Lower leg skin (tissue), 4 donors: ENCODE measurements at regions of chr15 and their contacts with region 1.

Region 1: DNA sequence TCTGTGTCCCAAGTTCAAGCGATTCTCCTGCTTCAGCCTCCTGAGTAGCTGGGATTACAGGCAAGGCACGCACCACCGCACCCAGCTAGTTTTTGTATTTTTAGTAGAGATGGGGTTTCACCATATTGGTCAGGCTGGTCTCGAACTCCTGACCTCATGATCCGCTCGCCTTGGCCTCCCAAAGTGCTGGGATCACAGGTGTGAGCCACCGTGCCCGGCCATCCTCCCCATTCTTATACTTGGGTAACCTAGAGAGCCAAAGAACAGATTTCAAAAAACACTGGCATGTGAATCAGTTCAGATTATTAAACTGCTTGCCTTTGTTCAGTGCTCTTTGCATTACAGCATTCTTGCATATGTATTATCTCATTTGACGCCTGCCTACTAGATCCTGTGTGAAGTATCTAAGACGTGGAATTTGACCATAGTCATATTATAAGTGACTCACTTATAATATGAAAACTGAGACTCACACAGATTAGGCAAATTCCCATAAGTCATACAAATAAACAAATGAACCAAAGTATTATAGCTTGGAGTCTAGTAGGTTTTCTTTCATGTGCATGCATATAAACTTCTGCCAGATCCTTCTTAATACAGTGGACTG is 123.5 kb downstream of the UNC13C start:
- DNase-seq: no peak
- H3K4me3 ChIP-seq: no peak overlapping the region
- CTCF ChIP-seq: no peak
- POLR2A ChIP-seq: no peak

Region 2: GRCh38 chr15:54046113-54046512 is 55.7 kb before region 1 on chr15:
- intact Hi-C with region 1: no loop called
- DNase-seq: no peak
- H3K4me3 ChIP-seq: no peak overlapping the region
- CTCF ChIP-seq: no peak
- POLR2A ChIP-seq: no peak

Region 3: GRCh38 chr15:54131410-54131809 is 29.6 kb after region 1 on chr15:
- intact Hi-C with region 1: loop called (anchors 1 kb)
- DNase-seq: no peak
- H3K4me3 ChIP-seq: no peak overlapping the region
- CTCF ChIP-seq: no peak
- POLR2A ChIP-seq: no peak

Region 4: DNA sequence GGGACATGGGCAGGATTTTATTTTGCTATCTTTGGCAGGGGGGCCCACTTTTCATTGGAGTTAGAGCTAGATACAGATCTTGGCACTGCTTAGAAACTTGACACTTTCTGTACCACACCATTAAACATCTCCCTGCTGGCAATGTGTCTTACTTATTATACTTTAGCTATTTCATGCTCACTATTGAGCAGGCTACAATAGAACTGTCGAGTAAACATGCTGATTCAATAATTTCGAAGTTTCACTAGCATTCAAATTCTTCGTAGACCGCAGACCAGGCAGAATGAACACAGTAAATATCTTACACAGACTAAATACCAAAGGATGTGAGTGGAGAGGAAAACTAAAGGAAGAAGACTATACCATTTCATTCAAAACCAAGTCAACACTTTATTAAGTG is 57.2 kb after region 1 on chr15:
- intact Hi-C with region 1: no loop called
- DNase-seq: no peak
- H3K4me3 ChIP-seq: no peak overlapping the region
- CTCF ChIP-seq: no peak
- POLR2A ChIP-seq: no peak